B cell (primary cell): ENCODE measurements at regions of chr1 and their contacts with region 1.

Region 1: DNA sequence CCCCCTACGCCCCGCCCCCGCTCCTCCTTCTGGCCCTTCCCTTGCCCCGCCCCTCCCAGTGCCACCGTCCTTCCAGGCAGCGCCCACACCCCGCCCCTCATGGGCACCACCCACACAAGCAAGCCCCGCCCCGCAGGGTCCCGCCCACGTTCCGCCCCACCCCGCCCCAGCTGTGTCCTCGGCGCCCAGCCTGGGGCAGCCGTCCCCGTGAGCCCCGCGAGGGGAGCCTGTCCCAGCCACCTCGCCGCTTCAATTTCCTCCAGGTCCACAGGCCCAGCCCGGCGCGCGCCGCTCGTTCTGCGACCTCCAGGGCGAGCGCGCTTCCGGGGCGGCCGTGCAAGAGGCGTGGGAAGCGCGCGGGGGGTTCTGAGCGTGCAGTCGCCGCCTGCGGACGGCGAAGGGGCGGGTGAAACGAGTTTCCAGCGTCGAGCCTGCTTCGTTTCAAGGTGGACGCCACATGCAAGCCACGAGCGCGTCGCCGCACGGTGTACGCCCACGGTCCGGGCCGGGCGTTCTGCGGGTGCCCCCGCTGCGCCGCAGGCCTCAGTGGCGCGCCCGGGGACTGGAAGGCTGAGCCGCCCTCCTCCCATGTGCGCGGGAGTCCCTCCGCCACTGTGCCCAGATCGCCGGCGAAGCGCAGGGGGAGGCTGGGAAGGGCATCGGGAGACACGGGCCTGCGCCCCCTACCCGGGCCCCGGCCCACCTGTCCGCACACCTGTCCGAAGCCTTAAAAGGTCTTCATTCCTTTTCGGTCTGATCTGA is 10.8 kb upstream of the FAAP20 start:
- DNase-seq: peak; percentile 95
- ATAC-seq: peak; percentile 93
- H3K4me3 ChIP-seq: peak overlapping the region in 4 of 5 experiments; percentile 46 to 70 (median 64)
- H3K4me3 Mint-ChIP-seq: peak overlapping the region; percentile 77
- H3K27ac ChIP-seq: peak overlapping the region in 1 of 2 donors; percentile 47
- H3K27ac Mint-ChIP-seq: peak overlapping the region; percentile 72
- H3K4me1 ChIP-seq: peaks cover 32 to 44% of the 10 kb centered on the region in 2 donors
- H3K4me1 Mint-ChIP-seq: peaks cover 30% of the 10 kb centered on the region
- H3K27me3 ChIP-seq: no peaks in the 10 kb centered on the region
- H3K27me3 Mint-ChIP-seq: no peaks in the 10 kb centered on the region
- CTCF ChIP-seq: no peak

Region 2: GRCh38 chr1:2133039-2133878 is 72.1 kb before region 1 on chr1:
- CTCF ChIA-PET with region 1: no interaction called
- POLR2A ChIA-PET with region 1: no interaction called
- intact Hi-C with region 1: loop called (anchors 5 kb)
- DNase-seq: peak; percentile 98
- ATAC-seq: peak; percentile 91
- H3K4me3 ChIP-seq: peak overlapping the region; percentile 16 to 64 (median 56)
- H3K4me3 Mint-ChIP-seq: peak overlapping the region; percentile 88
- H3K27ac ChIP-seq: peak overlapping the region; percentile 80 to 82
- H3K27ac Mint-ChIP-seq: peak overlapping the region; percentile 91
- H3K4me1 ChIP-seq: peaks cover 10 to 19% of the 10 kb centered on the region in 2 donors
- H3K4me1 Mint-ChIP-seq: peaks cover 23% of the 10 kb centered on the region
- H3K27me3 ChIP-seq: no peaks in the 10 kb centered on the region
- H3K27me3 Mint-ChIP-seq: no peaks in the 10 kb centered on the region
- CTCF ChIP-seq: no peak

Region 3: DNA sequence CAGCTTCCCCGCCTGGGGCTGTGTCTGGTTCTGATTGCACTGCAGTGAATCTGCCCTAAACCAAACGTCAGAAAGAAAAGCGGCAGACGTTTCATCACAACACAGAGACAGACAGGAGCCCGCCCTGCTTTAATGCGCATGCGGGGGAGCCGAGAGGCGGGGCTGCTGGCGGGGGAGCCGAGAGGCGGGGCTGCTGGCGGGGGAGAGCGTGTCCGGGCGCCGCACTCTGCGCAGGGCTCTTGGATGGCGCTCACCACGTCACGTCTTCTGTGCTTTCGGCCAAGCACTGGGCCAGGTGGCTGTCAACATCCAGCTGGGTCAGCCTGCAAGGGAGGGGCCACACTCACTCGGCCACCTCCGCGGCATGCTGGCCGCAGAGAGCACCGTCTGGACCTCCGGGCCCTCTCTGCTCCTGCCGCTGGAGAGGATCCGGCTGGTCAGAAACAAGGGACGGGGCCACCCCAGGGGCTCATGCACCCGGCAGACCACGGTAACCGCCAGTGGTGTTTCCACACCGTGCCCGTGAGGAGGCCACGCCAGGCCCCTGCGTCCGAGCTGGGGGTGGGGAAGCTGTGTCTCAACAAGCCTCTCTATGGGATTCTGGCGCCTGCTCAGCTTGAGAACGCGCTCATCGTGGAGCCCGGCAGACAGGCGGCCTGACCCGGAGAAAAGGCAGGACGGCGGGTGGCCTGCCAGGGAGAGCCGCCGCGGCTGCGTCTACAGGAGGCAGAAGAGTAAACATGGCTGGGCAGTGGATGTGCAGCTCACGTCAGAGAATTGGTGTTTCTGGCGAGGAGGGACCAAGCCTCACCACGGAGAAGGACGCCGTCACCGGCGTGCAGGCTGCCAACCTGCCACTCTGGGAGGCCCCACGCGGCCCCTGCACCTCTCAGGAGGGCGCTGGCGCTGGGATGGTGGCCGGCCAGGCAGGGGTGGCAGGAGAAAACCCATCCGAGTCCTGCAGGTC is 15.6 kb before region 1 on chr1:
- CTCF ChIA-PET with region 1: interaction called, 18 read pairs
- POLR2A ChIA-PET with region 1: interaction called, 4 read pairs
- intact Hi-C with region 1: loop called (anchors 2 kb)
- DNase-seq: peak; percentile 90
- ATAC-seq: peak; percentile 90
- H3K4me3 ChIP-seq: peak overlapping the region in 4 of 5 experiments; percentile 33 to 57 (median 54)
- H3K4me3 Mint-ChIP-seq: peak overlapping the region; percentile 75
- H3K27ac ChIP-seq: peak overlapping the region in 1 of 2 donors; percentile 73
- H3K27ac Mint-ChIP-seq: peak overlapping the region; percentile 93
- H3K4me1 ChIP-seq: peaks cover 4 to 25% of the 10 kb centered on the region in 2 donors
- H3K4me1 Mint-ChIP-seq: peaks cover 15% of the 10 kb centered on the region
- H3K27me3 ChIP-seq: no peaks in the 10 kb centered on the region
- H3K27me3 Mint-ChIP-seq: no peaks in the 10 kb centered on the region
- CTCF ChIP-seq: no peak

Region 4: GRCh38 chr1:2227346-2228153 is 22.2 kb after region 1 on chr1:
- CTCF ChIA-PET with region 1: interaction called, 4 read pairs
- POLR2A ChIA-PET with region 1: interaction called, 8 read pairs
- intact Hi-C with region 1: loop called (anchors 1 kb)
- DNase-seq: peak; percentile 98
- ATAC-seq: peak; percentile 91
- H3K4me3 ChIP-seq: peak overlapping the region in 4 of 5 experiments; percentile 50 to 65 (median 60)
- H3K4me3 Mint-ChIP-seq: peak overlapping the region; percentile 80
- H3K27ac ChIP-seq: peak overlapping the region; percentile 57 to 83
- H3K27ac Mint-ChIP-seq: peak overlapping the region; percentile 83
- H3K4me1 ChIP-seq: peaks cover 35 to 43% of the 10 kb centered on the region in 2 donors
- H3K4me1 Mint-ChIP-seq: peaks cover 37% of the 10 kb centered on the region
- H3K27me3 ChIP-seq: no peaks in the 10 kb centered on the region
- H3K27me3 Mint-ChIP-seq: no peaks in the 10 kb centered on the region
- CTCF ChIP-seq: no peak

Region 5: GRCh38 chr1:2406451-2407041 is 201.2 kb after region 1 on chr1:
- CTCF ChIA-PET with region 1: no interaction called
- POLR2A ChIA-PET with region 1: interaction called, 10 read pairs
- intact Hi-C with region 1: no loop called
- DNase-seq: no peak
- ATAC-seq: no peak
- H3K4me3 ChIP-seq: no peak overlapping the region
- H3K4me3 Mint-ChIP-seq: no peak overlapping the region
- H3K27ac ChIP-seq: no peak overlapping the region
- H3K27ac Mint-ChIP-seq: no peak overlapping the region
- H3K4me1 ChIP-seq: peaks cover 1 to 2% of the 10 kb centered on the region in 2 donors
- H3K4me1 Mint-ChIP-seq: peaks cover 7% of the 10 kb centered on the region
- H3K27me3 ChIP-seq: no peaks in the 10 kb centered on the region
- H3K27me3 Mint-ChIP-seq: no peaks in the 10 kb centered on the region
- CTCF ChIP-seq: no peak